Activated T-helper 1 cell treated with anti-CD3 and anti-CD28 coated beads, Interleukin-12 subunit alpha, Interleukin-12 subunit beta, Interleukin-2, Interleukin-4 antibody, amounts not matched to agents 30 ng/mL and 10 ng/mL and 1 ng/mL, durations not matched to agents 14 hours and 24 hours and 36 hours (primary cell): ENCODE measurements at regions of chr11 and their contacts with region 1.

Region 1: DNA sequence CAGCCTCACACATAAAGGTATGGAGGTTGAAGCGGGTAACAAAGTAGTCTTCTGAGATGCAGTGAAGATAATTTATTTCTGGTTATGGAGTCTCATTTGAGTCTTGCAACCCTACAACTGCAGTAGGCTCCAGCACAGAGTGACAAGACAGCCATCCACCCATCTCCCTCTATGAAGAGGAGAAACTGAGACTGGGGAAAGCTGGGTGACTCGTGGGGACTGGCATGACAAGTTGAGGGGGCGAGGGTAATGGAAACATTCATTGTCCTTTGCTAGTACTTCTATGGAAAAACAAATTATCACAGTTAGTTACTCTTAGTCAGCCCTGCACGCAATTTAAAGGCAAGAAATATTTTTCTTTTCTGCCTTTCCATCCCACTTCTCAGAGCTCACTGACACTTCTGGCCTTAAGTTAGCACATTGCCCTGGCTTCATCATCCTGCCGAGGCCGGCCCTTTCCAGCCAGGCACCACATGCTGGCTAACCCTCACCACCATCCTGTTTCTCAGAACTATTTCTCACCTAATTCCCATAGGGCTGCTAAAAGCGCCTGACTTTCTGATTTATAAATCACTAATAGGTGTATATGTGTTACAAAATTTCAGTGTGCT is 361.1 kb downstream of the ETS1 start:
- DNase-seq: no peak
- H3K4me3 Mint-ChIP-seq: peak overlapping the region; percentile 37
- H3K27ac Mint-ChIP-seq: peak overlapping the region; percentile 89
- H3K4me1 Mint-ChIP-seq: peaks cover 44% of the 10 kb centered on the region
- H3K27me3 Mint-ChIP-seq: no peaks in the 10 kb centered on the region

Region 2: DNA sequence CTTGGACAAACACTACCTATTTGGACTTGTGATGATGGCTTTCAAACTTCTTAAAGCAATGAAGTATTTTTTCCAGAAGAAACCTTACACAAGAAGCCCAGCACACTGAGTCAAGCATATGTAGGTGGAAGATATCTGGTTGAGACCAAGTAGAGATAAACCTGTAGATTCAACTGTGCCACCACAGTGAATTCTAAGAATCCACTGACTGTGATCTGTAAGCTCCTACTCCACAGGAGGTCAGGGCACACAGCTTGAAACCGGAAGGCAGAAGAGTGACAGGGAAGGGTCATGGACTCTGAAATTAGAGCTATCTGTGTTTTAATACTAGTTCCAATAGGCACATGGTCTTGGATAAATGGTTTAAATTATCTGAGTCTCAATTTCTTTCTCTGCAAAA is 43.4 kb before region 1 on chr11:
- intact Hi-C with region 1: loop called (anchors 1 kb)
- DNase-seq: no peak
- H3K4me3 Mint-ChIP-seq: no peak overlapping the region
- H3K27ac Mint-ChIP-seq: peak overlapping the region; percentile 51
- H3K4me1 Mint-ChIP-seq: peaks cover 45% of the 10 kb centered on the region
- H3K27me3 Mint-ChIP-seq: no peaks in the 10 kb centered on the region

Region 3: GRCh38 chr11:128195057-128195751 is 31.0 kb before region 1 on chr11:
- intact Hi-C with region 1: loop called (anchors 1 kb)
- DNase-seq: peak; percentile 42
- H3K4me3 Mint-ChIP-seq: no peak overlapping the region
- H3K27ac Mint-ChIP-seq: peak overlapping the region; percentile 60
- H3K4me1 Mint-ChIP-seq: peaks cover 47% of the 10 kb centered on the region
- H3K27me3 Mint-ChIP-seq: peaks cover 2% of the 10 kb centered on the region

Region 4: DNA sequence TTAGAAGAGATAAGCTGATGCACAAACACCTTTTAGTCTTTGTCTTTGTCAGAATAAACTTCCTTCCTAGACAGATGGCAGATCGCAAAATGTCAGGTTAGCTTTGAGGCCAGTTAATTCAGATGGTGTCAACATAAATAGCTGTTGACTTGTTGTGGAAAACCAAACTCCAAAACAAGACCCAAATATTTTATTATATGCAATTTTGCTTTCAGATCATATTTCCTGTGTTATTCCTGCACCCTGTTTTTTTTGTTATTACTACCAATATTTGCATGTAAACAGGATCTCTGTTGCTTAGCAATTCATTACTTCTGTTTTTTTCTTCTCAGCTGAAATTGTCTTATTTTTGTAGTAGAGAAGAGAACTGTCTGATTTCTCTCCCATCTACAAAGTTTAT is 45.2 kb after region 1 on chr11:
- intact Hi-C with region 1: no loop called
- DNase-seq: no peak
- H3K4me3 Mint-ChIP-seq: no peak overlapping the region
- H3K27ac Mint-ChIP-seq: no peak overlapping the region
- H3K4me1 Mint-ChIP-seq: peaks cover 16% of the 10 kb centered on the region
- H3K27me3 Mint-ChIP-seq: peaks cover 3% of the 10 kb centered on the region

Region 5: DNA sequence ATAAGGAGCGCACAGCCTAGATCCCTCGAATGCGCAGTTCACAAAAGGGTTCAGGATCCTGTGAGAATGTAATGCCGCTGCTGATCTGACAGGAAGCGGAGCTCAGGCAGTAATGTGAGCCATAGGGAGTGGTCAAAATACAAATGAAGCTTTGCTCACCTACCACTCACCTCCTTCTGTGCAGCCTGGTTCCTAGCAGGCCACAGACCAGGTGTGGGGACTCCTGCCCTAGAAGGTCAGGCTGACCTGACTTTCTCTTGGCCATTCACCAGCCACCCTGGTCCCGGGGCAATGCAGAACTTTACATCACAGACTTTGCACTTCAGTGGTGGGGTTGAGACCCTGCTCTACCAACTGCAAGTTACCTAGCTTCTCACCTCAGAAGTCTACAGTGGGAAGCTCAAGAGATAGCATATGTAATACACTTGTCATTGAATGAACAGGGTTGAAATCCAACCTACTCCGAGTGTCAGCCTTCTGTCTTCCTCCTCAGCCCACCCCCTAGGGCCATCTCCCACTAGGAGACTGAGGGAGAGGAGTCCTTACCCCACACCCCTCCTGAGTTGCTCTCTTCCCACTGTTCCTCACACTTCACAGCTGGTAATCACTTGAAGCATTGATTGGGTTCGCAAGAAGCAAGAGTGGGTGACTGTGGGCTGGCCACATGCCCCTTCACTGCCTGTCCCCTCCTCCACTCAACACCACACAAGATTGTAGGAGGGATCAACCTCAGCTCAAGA is 642.8 kb after region 1 on chr11:
- intact Hi-C with region 1: loop called (anchors 5 kb)
- DNase-seq: no peak
- H3K4me3 Mint-ChIP-seq: no peak overlapping the region
- H3K27ac Mint-ChIP-seq: no peak overlapping the region
- H3K4me1 Mint-ChIP-seq: no peaks in the 10 kb centered on the region
- H3K27me3 Mint-ChIP-seq: peaks cover 13% of the 10 kb centered on the region